IMR-90 (cell line): ENCODE measurements at regions of chr5 and their contacts with region 1.

Region 1: GRCh38 chr5:110916381-110917049 is 155.0 kb upstream of the TSLP start:
- DNase-seq: peak; percentile 95
- ATAC-seq: peak; percentile 94
- H3K4me3 ChIP-seq: no peak overlapping the region
- H3K27ac ChIP-seq: peak overlapping the region; percentile 83; the same call in 1 of the 2 replicates
- H3K4me1 ChIP-seq: peaks cover 11% of the 10 kb centered on the region
- H3K27me3 ChIP-seq: no peaks in the 10 kb centered on the region
- CTCF ChIP-seq: no peak
- POLR2A ChIP-seq: no peak
- RAD21 ChIP-seq: no peak; the same call in 1 of the 2 replicates

Region 2: GRCh38 chr5:110478895-110479294 is 437.6 kb before region 1 on chr5:
- CTCF ChIA-PET with region 1: no interaction called
- POLR2A ChIA-PET with region 1: no interaction called
- dilution Hi-C with region 1: no loop called
- in situ Hi-C with region 1: no loop called
- intact Hi-C with region 1: no loop called
- DNase-seq: peak; percentile 74
- ATAC-seq: peak; percentile 56
- H3K4me3 ChIP-seq: no peak overlapping the region
- H3K27ac ChIP-seq: no peak overlapping the region
- H3K4me1 ChIP-seq: no peaks in the 10 kb centered on the region
- H3K27me3 ChIP-seq: no peaks in the 10 kb centered on the region
- CTCF ChIP-seq: no peak
- POLR2A ChIP-seq: no peak
- RAD21 ChIP-seq: no peak

Region 3: DNA sequence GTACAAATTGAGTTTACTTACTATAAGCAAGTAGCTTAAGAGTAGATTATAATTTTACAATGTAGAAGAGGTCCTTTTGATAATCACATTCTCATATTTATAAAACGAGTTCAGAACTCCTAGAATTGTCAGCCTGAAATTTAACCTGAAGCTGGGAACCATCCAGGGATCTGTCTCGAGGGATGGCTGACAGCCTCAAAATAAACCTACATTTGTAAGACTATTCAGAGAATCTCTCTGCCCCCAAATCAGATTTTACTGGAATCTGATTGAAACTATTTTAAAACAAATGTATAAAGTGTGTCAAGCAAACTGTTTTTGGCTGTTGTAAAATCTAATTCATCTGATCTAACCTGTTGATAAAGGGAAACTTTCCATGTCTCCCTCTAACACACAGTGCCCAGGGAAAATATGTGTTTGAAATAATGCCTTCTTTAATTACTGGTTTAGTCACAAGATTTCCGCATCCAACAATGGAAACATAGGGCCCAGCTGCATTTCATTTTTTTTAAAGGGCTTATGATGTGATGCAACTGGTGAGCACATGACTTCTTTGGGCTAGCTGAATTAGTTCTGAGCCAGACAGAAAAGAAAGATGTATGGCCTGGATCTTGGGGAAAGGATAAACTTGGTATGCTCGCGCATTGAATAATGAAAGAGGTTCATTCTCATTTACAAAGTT is 147.4 kb before region 1 on chr5:
- CTCF ChIA-PET with region 1: no interaction called
- POLR2A ChIA-PET with region 1: no interaction called
- dilution Hi-C with region 1: no loop called
- in situ Hi-C with region 1: no loop called
- intact Hi-C with region 1: loop called (anchors 5 kb)
- DNase-seq: peak; percentile 83
- ATAC-seq: peak; percentile 62
- H3K4me3 ChIP-seq: no peak overlapping the region
- H3K27ac ChIP-seq: peak overlapping the region; percentile 69; the same call in 1 of the 2 replicates
- H3K4me1 ChIP-seq: 0 out of 2 replicates have a peak, but pooled peaks cover 2% of the 10 kb centered on the region
- H3K27me3 ChIP-seq: no peaks in the 10 kb centered on the region
- CTCF ChIP-seq: no peak
- POLR2A ChIP-seq: no peak
- RAD21 ChIP-seq: no peak

Region 4: DNA sequence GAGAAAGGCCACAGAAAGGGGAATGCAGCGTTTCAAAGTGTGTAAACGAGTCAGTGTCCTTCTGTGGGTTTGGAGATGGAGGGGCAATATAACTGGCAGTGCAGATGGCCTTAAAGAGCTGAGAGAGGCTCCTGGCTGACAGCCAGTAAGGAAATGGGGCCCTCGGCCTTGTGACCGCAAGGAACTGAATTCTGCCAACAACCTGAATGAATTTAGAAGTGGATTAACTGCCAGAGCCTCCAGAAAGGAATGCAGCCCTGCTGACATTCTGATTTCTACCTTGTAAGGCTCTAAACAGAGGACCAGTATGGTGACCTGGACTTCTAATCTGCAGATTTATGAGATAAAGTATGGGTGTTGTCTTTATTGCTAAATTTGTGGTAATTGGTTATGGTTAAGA is 858.0 kb after region 1 on chr5:
- CTCF ChIA-PET with region 1: no interaction called
- POLR2A ChIA-PET with region 1: interaction called, 15 read pairs
- dilution Hi-C with region 1: no loop called
- in situ Hi-C with region 1: no loop called
- intact Hi-C with region 1: no loop called
- DNase-seq: peak; percentile 42
- ATAC-seq: no peak; the same call in 1 of the 2 replicates
- H3K4me3 ChIP-seq: no peak overlapping the region
- H3K27ac ChIP-seq: no peak overlapping the region
- H3K4me1 ChIP-seq: peaks cover 3% of the 10 kb centered on the region
- H3K27me3 ChIP-seq: no peaks in the 10 kb centered on the region
- CTCF ChIP-seq: no peak
- POLR2A ChIP-seq: no peak
- RAD21 ChIP-seq: no peak